SK-MEL-5 (cell line): ENCODE measurements at regions of chr20 and their contacts with region 1.

Region 1: DNA sequence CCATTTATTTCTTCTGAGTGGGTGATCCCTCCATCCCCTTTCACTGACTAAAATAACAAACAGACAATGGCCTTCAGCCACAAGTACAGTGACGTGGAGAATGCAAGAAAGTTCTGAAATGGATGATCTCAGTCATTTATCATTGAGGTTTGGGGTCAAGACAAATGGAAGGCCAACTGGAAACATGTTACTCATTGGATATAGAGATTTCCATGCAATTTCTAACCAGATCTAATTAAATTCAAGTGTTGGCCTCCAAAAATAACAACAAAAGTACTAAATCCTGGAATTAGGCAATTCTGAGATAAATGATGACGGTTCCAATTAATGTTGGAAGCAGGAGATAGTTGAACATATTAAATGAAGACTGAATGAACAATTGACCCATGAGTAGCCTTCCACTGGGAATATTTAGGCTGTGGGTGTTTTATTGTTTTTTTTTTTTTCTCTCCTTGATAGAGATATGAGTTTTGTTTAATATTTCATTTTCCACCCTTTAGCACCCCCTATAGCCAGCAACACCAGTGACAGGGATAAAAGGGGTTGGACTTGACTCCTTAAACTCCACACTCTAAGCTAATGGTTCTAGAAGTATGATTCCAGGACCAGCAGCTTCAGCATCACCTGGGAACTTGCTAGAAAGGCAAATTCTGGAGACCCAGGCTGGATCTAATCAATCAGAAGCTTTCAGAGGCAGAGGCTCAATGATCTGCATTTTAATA is 112.8 kb downstream of the BCAS1 start:
- DNase-seq: peak; percentile 43

Region 2: DNA sequence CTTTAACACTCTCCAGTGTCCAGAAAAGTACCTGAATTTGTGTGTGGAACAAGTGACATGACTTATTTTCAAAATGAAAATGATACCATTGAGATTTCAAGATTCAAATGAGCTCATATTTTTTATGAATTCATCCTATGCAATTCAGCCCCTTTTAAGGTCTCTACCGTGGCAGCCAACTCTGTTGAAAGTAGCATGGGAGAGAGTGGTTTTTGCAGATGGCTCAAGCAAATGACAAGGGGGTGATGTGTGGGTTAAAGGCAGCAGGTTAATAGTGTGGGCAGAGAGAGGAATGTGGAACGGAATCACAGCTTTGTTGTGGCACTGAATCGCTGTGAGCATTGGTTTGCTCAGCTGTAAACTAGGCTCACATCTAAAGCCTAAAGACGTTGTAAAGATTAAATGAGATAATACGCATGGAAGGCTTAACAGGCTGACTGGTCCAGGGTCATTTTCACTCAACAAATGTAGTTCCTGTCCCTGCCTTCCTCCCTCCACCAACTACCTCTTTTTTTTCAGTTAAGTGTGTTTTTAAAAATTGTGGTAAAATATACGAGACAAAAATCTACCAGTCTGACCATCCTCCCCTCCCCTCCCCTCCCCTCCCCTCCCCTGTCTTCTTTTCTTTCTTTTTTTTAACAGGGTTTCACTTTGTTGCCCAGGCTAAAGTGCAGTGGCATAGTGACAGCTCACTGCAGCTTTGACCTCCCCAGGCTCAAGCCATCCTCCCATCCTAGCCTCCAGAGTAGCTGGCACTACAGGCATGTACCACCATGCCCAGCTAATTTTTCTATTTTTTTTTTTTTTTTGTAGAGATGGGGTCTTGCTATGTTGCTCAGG is 249.3 kb before region 1 on chr20:
- in situ Hi-C with region 1: no loop called
- DNase-seq: no peak

Region 3: DNA sequence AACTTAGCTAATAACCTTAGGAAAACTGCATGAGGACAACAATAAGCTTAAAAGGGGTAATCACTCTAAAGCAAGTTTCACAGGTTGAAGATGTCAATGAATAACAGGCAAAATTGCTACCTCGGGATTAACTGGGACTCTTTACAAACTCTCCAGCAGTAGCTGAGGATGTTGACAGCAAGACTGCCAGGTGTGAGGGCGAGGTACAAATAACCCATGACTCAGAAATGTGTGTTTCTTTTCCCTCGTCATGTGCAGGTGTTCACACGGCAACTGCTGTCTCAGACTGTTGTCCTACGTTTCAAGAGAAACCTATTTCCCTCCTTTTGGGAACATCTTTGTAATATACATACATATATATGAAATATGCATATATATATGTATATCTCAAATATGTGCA is 96.9 kb after region 1 on chr20:
- in situ Hi-C with region 1: loop called (anchors 5 kb)
- DNase-seq: no peak